ENCODE measurements at regions of chr22 and their contacts with region 1.

Region 1: GRCh38 chr22:27919222-27919941 is at the start of gene PITPNB:
- DNase-seq: peak; percentile 96 to 98
- H3K4me3 ChIP-seq: peak within 1 kb of the TSS; percentile 84
- H3K4me3 Mint-ChIP-seq: peak within 1 kb of the TSS; percentile 74
- H3K27ac Mint-ChIP-seq: peak within 1 kb of the TSS; percentile 100
- H3K4me1 ChIP-seq: peaks cover 14% of the 10 kb centered on the region; the same call in 1 of the 2 replicates
- H3K4me1 Mint-ChIP-seq: peaks cover 34% of the 10 kb centered on the region
- H3K27me3 ChIP-seq: no peaks in the 10 kb centered on the region
- H3K27me3 Mint-ChIP-seq: no peaks in the 10 kb centered on the region
- CTCF ChIP-seq: no peak
- total RNA-seq, gene PITPNB: 76.8 and 81.7 TPM in 2 replicates

Region 2: GRCh38 chr22:27866132-27867086 is 53.0 kb before region 1 on chr22:
- CTCF ChIA-PET with region 1: no interaction called
- POLR2A ChIA-PET with region 1: no interaction called
- intact Hi-C with region 1: no loop called
- DNase-seq: no peak
- H3K4me3 ChIP-seq: no peak overlapping the region
- H3K4me3 Mint-ChIP-seq: no peak overlapping the region
- H3K27ac Mint-ChIP-seq: no peak overlapping the region
- H3K4me1 ChIP-seq: peaks cover 48% of the 10 kb centered on the region
- H3K4me1 Mint-ChIP-seq: peaks cover 42% of the 10 kb centered on the region
- H3K27me3 ChIP-seq: no peaks in the 10 kb centered on the region
- H3K27me3 Mint-ChIP-seq: no peaks in the 10 kb centered on the region
- CTCF ChIP-seq: no peak

Region 3: DNA sequence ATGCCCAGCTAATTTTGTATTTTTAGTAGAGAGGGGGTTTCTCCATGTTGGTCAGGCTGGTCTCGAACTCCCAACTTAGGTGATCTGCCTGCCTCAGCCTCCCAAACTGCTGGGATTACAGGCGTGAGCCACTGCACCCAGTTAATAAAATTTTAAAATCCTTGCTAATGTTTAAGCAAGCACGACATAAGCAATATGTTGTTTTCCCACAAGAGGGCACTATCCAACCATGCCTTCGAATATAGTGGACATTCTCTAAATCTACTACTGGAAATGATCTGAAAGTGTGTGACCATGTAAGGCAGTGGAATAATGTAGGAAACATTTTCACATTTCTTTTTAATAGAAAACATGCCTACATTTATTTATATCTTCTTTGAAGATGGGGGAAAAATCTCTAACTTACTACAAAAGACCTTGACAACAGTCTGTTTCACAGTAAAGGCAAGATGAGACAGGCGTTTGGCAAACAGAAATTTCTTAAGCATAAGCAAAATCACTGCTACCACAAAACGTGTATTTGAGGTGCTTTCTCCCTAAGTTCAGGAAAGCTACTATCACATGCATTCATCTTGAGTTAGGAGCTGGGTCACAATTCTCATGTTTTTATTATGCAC is 38.5 kb before region 1 on chr22:
- CTCF ChIA-PET with region 1: interaction called, 3 read pairs
- POLR2A ChIA-PET with region 1: no interaction called
- intact Hi-C with region 1: loop called (anchors 5 kb)
- DNase-seq: peak in 1 of 2 experiments; percentile 56
- H3K4me3 ChIP-seq: no peak overlapping the region
- H3K4me3 Mint-ChIP-seq: no peak overlapping the region
- H3K27ac Mint-ChIP-seq: no peak overlapping the region
- H3K4me1 ChIP-seq: no peaks in the 10 kb centered on the region
- H3K4me1 Mint-ChIP-seq: peaks cover 6% of the 10 kb centered on the region
- H3K27me3 ChIP-seq: no peaks in the 10 kb centered on the region
- H3K27me3 Mint-ChIP-seq: no peaks in the 10 kb centered on the region
- CTCF ChIP-seq: peak; percentile 38 to 68